Dendritic cell treated with granulocyte-macrophage colony-stimulating factor and Interleukin-4, amounts not matched to agents 40 ng/mL and 50 ng/mL, for 4 days (primary cell): ENCODE measurements at regions of chr19 and their contacts with region 1.

Region 1: DNA sequence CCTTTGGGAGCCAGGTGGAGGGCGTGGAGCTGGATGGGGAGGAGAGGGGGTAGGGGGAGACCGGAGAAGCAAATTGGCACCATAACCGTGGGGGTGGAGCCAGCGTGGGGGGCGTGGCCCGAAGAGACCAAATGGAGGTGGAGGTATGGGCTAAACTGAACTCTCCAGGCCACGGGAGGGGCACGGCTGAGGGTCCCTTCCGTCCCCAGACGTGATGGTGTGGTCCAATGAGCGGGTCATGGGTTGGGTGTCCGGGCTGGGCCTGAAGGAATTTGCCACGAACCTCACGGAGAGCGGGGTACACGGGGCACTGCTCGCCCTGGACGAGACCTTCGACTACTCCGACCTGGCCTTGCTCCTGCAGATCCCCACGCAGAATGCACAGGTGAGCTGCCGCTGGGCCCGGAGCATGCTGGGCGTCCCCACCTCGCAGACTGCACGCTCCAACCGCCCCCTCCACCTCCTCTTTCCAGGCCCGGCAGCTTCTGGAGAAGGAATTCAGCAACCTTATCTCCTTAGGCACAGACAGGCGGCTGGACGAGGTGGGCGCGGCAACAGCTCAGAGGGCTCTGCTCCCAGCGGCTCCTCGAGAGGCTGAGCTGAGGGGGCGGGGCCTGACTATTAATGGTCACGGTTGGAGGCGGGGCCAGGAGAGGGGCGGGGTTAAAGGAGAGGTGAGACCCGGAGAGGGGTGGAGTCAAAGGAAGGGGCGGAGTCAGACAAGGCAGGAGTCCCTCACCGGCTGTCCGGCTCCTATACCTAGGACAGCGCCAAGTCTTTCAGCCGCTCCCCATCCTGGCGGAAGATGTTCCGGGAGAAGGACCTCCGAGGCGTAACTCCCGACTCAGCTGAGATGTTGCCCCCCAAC is 6.2 kb downstream of the HRC start:
- H3K4me3 Mint-ChIP-seq: peak overlapping the region; percentile 85
- H3K27ac Mint-ChIP-seq: peak overlapping the region; percentile 87
- H3K4me1 Mint-ChIP-seq: peaks cover 59% of the 10 kb centered on the region
- H3K27me3 Mint-ChIP-seq: peaks cover 86% of the 10 kb centered on the region

Region 2: DNA sequence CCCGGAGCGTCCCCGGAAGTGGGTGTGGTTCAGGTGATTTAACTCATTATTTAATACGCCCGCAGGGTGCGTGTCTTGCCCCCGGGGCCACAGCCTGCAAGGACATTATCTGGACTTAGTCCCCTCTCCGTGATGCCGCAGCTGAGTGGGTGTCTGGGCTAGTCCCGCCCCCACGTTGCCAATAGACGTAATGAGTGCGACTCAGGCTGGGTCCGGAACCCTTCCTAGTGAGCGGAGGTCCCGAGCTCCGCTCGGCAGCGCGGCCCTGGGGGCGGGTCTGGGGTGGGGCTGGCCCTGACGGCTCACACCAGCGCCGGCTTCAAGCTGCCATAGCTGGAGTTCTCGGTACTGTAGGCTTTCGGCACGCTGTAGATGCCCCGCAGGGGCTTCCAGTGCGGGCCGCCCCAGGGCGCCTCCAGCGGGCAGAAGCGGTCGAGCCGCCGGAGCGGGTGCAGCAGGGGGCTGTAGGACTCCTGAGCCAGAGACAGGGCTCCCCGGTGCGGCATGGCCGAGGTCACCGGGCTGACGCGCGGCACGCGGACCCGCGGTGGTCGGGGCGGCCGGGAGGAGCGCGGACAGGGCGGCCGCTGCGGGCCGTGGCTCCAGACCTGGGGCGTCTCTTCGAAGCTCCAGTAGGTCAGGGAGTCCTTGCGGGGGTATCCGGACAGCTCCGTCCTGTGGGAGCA is 131.2 kb before region 1 on chr19:
- intact Hi-C with region 1: no loop called
- H3K4me3 Mint-ChIP-seq: peak overlapping the region; percentile 81
- H3K27ac Mint-ChIP-seq: no peak overlapping the region
- H3K4me1 Mint-ChIP-seq: peaks cover 19% of the 10 kb centered on the region
- H3K27me3 Mint-ChIP-seq: peaks cover 48% of the 10 kb centered on the region

Region 3: DNA sequence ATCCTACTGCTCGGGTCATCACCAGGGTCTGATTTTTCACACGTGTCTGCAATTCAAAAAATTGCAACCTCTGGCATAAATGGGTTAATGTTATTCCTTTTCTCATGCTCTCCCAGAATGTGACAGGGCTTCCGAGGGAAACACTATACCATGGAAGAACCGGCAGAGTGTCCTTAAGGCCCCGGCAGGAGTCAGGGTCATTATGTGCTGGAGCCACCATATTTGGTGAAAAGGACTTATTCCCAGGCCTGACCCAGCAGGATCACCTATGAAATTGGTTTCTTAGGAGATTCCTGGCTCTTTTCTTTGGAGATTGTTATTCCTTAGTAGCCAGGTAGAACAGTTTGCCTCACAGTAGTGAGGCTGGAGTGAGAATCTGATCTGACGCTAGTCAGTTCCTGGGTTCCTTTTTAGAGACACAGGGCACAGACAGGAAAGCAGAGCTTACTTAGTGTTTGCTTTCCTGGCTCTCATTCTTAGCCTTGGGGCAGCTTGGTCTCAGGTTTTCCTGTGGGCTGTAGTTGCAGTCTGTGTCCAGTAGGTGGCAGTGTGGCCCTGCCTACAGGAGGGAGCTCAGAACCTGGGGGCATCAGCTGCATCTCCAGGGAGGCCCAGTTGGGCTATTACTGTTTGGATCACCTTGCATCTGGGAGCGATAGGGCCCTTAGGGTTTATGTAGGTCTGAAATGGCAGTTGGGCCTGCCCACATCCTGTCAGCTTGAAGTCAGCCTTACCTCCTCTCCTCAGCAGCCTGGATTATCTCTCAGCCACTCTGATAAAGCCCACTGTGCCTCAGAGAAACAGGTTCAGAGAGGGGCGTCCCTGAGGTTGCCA is 51.3 kb before region 1 on chr19:
- intact Hi-C with region 1: loop called (anchors 2 kb)
- H3K4me3 Mint-ChIP-seq: no peak overlapping the region
- H3K27ac Mint-ChIP-seq: no peak overlapping the region
- H3K4me1 Mint-ChIP-seq: no peaks in the 10 kb centered on the region
- H3K27me3 Mint-ChIP-seq: no peaks in the 10 kb centered on the region

Region 4: GRCh38 chr19:49118565-49119410 is 30.2 kb before region 1 on chr19 and contains the start of gene C19orf73:
- intact Hi-C with region 1: loop called (anchors 2 kb)
- H3K4me3 Mint-ChIP-seq: peak within 1 kb of the TSS; percentile 81
- H3K27ac Mint-ChIP-seq: peak within 1 kb of the TSS; percentile 99
- H3K4me1 Mint-ChIP-seq: peaks cover 56% of the 10 kb centered on the region
- H3K27me3 Mint-ChIP-seq: peaks cover 40% of the 10 kb centered on the region